WTC11 (cell line): ENCODE measurements at regions of chr22 and their contacts with region 1.

Region 1: DNA sequence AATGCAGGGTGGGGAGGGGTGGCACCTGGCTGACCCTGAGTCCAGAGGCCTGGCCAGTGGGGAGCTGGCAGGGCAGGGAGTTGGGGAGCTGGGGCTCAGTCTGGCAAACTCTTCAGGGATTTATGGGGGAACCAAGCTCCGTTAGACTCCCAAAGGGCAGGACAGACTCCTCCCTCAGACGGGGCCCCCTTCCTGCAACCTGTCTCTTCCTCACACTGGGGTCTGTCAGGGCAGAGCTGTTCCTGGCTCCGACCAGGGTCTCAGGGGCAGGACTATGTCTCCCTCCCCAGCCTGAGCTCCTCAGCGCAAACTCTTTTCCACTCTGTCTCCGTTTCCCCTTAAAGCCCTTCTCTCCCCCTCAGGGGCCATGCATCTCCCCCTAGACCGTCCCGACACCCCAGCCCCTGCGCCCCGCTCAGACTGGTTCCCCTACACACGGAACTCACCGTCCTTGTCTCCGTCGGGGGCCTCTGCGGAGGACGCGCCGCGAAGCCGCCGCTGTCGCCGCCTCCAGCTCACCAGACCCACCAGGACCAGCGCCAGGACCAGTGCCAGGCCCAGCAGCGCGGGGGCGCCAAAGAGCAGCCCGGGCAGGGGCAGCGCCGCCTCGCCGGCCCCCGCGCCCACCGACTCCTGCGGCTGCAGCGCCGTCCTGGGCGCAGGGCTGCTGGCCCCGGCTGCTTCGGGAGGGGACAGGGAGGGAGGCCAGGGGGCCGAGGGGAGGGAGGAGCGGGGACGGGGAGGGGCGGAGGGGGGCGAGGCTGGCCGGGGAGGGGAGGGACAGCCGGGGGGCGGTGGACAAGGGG is 748 bp downstream of the TNFRSF13C start:
- DNase-seq: peak; percentile 91
- ATAC-seq: peak; percentile 80
- H3K4me3 Mint-ChIP-seq: peak overlapping the region; percentile 67
- H3K27ac Mint-ChIP-seq: no peak overlapping the region
- H3K4me1 Mint-ChIP-seq: peaks cover 16% of the 10 kb centered on the region
- H3K27me3 Mint-ChIP-seq: peaks cover 87% of the 10 kb centered on the region
- CTCF ChIP-seq: peak; percentile 85

Region 2: GRCh38 chr22:41621099-41621910 is 304.6 kb before region 1 on chr22 and contains the start of gene XRCC6:
- CTCF ChIA-PET with region 1: no interaction called
- POLR2A ChIA-PET with region 1: interaction called, 13 read pairs
- DNase-seq: peak; percentile 100
- ATAC-seq: peak; percentile 92
- H3K4me3 Mint-ChIP-seq: peak within 1 kb of the TSS; percentile 94
- H3K27ac Mint-ChIP-seq: peak within 1 kb of the TSS; percentile 99
- H3K4me1 Mint-ChIP-seq: peaks cover 20% of the 10 kb centered on the region
- H3K27me3 Mint-ChIP-seq: no peaks in the 10 kb centered on the region; the same call in 1 of the 2 replicates
- CTCF ChIP-seq: no peak
- total RNA-seq, gene XRCC6: 410 to 474 TPM (median 420 TPM) in 3 replicates

Region 3: GRCh38 chr22:41800348-41801146 is 125.3 kb before region 1 on chr22 and contains the start of gene CCDC134:
- CTCF ChIA-PET with region 1: interaction called, 15 read pairs
- POLR2A ChIA-PET with region 1: interaction called, 6 read pairs
- DNase-seq: peak; percentile 91
- ATAC-seq: peak; percentile 95
- H3K4me3 Mint-ChIP-seq: peak within 1 kb of the TSS; percentile 96
- H3K27ac Mint-ChIP-seq: peak within 1 kb of the TSS; percentile 98
- H3K4me1 Mint-ChIP-seq: peaks cover 30% of the 10 kb centered on the region
- H3K27me3 Mint-ChIP-seq: no peaks in the 10 kb centered on the region
- CTCF ChIP-seq: no peak
- total RNA-seq, gene CCDC134: 19.0 to 21.3 TPM (median 19.2 TPM) in 3 replicates

Region 4: GRCh38 chr22:41940832-41941765 is 15.2 kb after region 1 on chr22:
- CTCF ChIA-PET with region 1: interaction called, 143 read pairs
- POLR2A ChIA-PET with region 1: no interaction called
- DNase-seq: peak; percentile 91
- ATAC-seq: peak; percentile 87
- H3K4me3 Mint-ChIP-seq: no peak overlapping the region
- H3K27ac Mint-ChIP-seq: peak overlapping the region; percentile 0; the same call in 1 of the 2 replicates
- H3K4me1 Mint-ChIP-seq: peaks cover 29% of the 10 kb centered on the region
- H3K27me3 Mint-ChIP-seq: no peaks in the 10 kb centered on the region
- CTCF ChIP-seq: peak; percentile 84

Region 5: GRCh38 chr22:41951898-41952474 is 26.1 kb after region 1 on chr22 and contains the start of gene SMIM45:
- CTCF ChIA-PET with region 1: interaction called, 37 read pairs
- POLR2A ChIA-PET with region 1: interaction called, 6 read pairs
- DNase-seq: peak; percentile 58
- ATAC-seq: peak; percentile 47
- H3K4me3 Mint-ChIP-seq: no peak within 1 kb of the TSS
- H3K27ac Mint-ChIP-seq: 0 out of 2 replicates have a peak within 1 kb of the TSS, but pooled peaks have one; percentile 32
- H3K4me1 Mint-ChIP-seq: peaks cover 26% of the 10 kb centered on the region
- H3K27me3 Mint-ChIP-seq: peaks cover 8% of the 10 kb centered on the region
- CTCF ChIP-seq: no peak

Region 6: DNA sequence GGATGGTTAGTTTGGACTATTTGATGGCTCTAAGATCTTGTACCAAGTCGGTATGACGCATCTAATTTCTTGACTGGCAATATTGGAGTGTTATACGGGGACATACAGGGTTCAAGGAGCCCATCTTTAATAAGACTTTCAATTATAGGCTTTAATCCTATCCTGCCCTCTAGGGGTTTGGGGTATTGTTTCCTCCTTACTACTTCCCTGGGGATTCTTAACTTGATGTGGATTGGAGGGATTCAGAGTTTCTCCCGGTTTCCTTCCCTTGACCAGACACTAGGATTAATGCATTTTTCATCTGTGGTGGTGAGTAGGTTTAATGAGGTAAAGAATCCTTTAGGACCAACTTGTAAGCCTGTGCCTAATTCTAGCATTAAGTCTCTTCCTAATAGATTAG is 185.9 kb after region 1 on chr22:
- CTCF ChIA-PET with region 1: interaction called, 21 read pairs
- POLR2A ChIA-PET with region 1: no interaction called
- DNase-seq: no peak
- ATAC-seq: peak; percentile 49; the same call in 1 of the 2 replicates
- H3K4me3 Mint-ChIP-seq: no peak overlapping the region
- H3K27ac Mint-ChIP-seq: no peak overlapping the region; the same call in 1 of the 2 replicates
- H3K4me1 Mint-ChIP-seq: peaks cover 7% of the 10 kb centered on the region
- H3K27me3 Mint-ChIP-seq: peaks cover 33% of the 10 kb centered on the region
- CTCF ChIP-seq: no peak

Region 7: DNA sequence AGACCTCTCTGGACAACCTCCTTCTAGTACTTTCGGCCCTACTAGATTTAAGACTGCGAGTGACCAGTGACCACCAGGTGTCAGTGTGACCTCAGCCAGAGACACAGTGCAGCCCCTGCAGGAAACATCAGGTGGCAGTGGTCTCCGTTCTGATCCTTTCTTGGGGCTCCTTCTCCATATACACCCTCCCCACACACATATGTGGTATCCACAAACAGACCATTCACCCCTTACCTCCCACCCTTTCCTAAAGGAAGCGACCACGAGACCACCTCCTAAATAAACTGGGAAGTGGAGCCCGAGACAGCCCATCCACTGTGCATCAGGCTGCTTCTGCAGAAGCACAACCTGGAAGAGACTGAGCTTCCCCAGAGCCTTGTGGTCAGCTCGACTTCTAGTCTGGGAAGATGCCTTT is 243.2 kb after region 1 on chr22:
- CTCF ChIA-PET with region 1: no interaction called
- POLR2A ChIA-PET with region 1: no interaction called
- DNase-seq: peak; percentile 90
- ATAC-seq: peak; percentile 92
- H3K4me3 Mint-ChIP-seq: no peak overlapping the region
- H3K27ac Mint-ChIP-seq: 0 out of 2 replicates have a peak overlapping the region, but pooled peaks have one; percentile 47
- H3K4me1 Mint-ChIP-seq: peaks cover 35% of the 10 kb centered on the region
- H3K27me3 Mint-ChIP-seq: no peaks in the 10 kb centered on the region
- CTCF ChIP-seq: peak; percentile 85